PC-9 (cell line): ENCODE measurements at regions of chr6 and their contacts with region 1.

Region 1: GRCh38 chr6:105326833-105327770 is 75.8 kb downstream of the PREP start:
- DNase-seq: peak; percentile 44 to 83
- H3K4me3 ChIP-seq: no peak overlapping the region; the same call in 1 of the 2 replicates
- H3K27ac ChIP-seq: peak overlapping the region; percentile 62
- H3K4me1 ChIP-seq: peaks cover 27% of the 10 kb centered on the region
- H3K27me3 ChIP-seq: no peaks in the 10 kb centered on the region
- CTCF ChIP-seq: no peak

Region 2: DNA sequence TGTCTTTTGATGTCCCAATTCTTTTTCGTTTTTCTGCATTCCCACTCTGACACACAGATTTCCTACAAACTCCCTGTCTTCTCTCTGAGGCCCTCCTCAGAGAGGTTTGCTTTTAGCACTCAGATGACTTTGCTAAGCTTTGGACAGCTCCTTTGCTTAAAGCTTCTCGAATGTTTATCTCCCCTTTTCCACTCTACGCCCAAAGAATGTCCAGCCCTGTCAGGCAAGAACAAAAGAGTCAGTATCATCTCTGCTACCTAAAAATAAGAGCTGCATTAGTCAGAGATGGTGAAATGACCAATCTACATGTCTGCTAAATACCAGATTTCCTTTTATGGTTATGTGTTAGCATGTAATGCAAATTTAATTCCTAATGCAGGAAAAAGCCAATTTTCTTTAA is 18.9 kb after region 1 on chr6:
- CTCF ChIA-PET with region 1: no interaction called
- POLR2A ChIA-PET with region 1: interaction called, 10 read pairs
- intact Hi-C with region 1: no loop called
- DNase-seq: peak in 1 of 2 experiments; percentile 48
- H3K4me3 ChIP-seq: no peak overlapping the region
- H3K27ac ChIP-seq: peak overlapping the region; percentile 13; the same call in 1 of the 2 replicates
- H3K4me1 ChIP-seq: no peaks in the 10 kb centered on the region
- H3K27me3 ChIP-seq: no peaks in the 10 kb centered on the region
- CTCF ChIP-seq: no peak

Region 3: DNA sequence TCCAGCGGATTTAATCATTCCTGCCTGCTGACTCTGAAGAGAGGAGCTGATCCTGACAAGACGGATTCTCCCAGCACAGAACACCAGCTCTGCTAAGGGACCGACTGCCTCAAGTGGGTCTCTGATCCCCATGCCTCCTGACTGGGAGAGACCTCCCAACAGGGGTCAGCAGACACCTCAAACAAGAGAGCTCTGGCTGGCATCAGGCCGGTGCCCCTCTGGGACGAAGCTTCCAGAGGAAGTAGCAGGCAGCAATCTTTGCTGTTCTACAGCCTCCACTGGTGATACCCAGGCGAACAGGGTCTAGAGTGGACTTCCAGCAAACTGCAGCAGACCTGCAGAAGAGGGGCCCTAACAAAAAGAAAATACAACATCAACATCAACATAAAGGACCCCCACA is 936.3 kb after region 1 on chr6:
- CTCF ChIA-PET with region 1: no interaction called
- POLR2A ChIA-PET with region 1: no interaction called
- intact Hi-C with region 1: no loop called
- DNase-seq: no peak
- H3K4me3 ChIP-seq: no peak overlapping the region
- H3K27ac ChIP-seq: no peak overlapping the region
- H3K4me1 ChIP-seq: no peaks in the 10 kb centered on the region; the same call in 1 of the 2 replicates
- H3K27me3 ChIP-seq: no peaks in the 10 kb centered on the region
- CTCF ChIP-seq: no peak